A549 (cell line): ENCODE measurements at regions of chr1 and their contacts with region 1.

Region 1: DNA sequence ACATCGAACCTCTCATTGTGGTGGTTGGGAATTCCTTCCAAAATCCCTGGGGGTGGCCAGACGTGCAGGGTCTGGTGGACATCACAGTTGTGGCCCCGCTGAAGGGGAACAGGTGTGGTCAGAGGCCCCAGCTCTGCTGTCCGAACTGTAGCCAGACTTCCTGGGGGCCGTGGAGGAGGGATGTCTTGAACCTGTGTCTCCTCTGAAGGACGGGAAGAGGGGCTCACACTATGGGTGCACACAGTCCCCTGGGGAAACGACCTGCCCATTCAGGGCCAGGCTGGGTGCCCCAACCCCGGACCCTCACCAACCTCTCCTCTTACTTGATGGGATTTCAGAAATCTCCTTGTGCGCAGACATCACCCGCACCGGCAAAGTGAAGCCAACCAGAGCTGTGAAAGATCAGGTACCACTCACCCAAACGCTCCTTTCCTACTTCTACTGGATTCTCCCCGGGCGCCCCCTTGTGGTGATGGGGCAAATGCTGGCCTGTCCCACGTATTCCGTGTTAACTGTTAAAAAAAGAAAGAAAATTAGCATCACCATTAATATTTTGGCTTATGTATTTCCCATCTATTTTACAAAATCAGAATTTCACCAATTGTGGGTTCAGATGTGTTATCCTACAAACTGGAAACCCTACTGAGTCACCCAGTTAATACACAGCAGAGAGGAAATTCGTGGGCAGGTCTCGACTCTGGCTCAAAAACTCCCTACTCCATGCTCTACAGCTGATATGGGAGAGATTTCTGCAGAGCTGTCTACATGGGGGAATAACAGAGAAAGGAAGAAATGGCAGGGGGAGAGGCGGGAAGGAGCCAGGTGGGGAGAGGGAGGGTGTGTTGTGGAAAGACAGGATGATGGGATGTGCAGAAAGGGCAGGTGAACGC is 28.1 kb downstream of the PADI4 start:
- DNase-seq: peak; percentile 40 to 56
- ATAC-seq: peak; percentile 95 to 97
- H3K4me3 ChIP-seq: no peak overlapping the region
- H3K27ac ChIP-seq: peak overlapping the region; percentile 23 to 79; a peak in 5 of 6 replicates
- H3K4me1 ChIP-seq: no peaks in the 10 kb centered on the region
- CTCF ChIP-seq: peak; percentile 76
- EP300 ChIP-seq: no peak
- POLR2A ChIP-seq: no peak
- RAD21 ChIP-seq: peak; percentile 78 to 82

Region 2: DNA sequence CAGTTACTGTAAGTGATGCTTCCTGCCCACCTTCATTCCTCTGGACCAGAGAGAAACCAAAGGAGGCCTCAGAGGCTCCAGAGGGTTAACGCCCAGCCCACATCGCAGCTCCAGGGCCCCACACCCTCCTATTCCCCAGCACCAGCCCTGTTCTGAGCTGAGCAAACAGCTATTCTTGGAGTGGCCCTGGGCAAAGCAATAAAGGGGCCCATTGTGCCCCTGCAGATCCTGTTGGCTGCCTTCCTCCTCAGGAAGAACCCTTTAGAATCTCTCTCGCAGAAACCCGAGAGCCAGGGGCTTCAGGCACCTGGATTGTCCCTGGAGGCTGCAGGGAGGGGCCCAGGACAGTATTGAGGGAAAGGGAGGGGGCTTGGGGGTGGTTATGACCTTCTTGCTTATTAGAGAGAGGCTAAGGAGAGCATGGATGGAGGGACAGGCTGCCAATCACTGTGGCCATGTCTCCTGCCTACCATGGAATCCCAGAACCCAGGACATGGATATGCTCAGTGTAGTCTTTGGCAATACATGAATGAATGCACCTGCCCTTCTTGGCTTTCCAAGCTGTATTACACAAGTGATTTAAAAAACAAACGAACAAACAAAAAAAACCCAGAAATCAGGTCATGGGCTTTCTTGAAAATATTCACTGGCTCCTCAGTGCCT is 226.0 kb before region 1 on chr1:
- CTCF ChIA-PET with region 1: no interaction called
- POLR2A ChIA-PET with region 1: no interaction called
- DNase-seq: no peak
- ATAC-seq: no peak
- H3K4me3 ChIP-seq: no peak overlapping the region
- H3K27ac ChIP-seq: no peak overlapping the region
- H3K4me1 ChIP-seq: no peaks in the 10 kb centered on the region
- CTCF ChIP-seq: no peak
- EP300 ChIP-seq: no peak
- POLR2A ChIP-seq: no peak
- RAD21 ChIP-seq: no peak

Region 3: DNA sequence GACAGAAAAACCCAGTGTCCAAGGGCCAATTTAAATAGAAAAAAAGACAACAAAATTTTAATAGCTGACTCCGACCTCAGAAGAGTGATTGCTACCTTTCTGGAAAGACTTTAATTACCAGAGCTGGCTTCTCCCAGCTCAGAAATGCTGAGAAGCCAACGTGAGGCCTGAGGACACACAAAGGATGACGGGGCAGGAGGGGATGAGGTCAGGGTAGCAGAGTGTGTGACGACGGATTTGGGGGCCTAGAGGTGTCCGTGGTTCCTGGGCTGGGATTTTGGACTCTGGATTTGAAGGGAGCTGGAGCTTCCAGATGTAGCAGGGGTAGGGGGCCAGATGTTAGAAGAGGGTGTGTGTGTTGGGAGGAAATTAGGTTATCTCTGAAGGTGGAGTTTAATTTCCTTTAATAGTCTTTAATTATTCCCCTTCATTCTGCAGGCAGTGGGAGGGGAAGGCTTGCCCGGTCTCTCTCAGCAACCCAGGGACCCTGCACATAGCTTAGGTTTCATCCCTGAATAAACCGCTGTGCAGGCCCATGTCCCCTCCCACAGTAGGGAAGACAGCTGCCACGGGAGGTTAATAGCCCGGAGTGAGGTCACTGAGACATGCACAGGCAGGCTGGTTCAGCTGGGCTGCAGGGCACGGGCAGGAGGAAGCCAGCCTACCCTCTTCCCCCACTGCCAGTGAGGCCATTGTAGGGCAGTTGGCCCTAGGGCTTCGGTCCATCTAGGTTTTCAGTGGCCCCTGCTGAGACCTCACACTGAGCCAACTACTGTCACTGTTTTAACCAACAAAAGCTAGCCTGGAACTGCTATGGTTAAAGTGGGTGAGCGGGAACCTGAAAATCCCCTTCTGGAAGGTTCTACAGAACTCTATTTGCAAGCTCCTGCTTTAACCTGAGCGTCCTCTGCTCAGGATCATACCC is 91.0 kb before region 1 on chr1:
- CTCF ChIA-PET with region 1: interaction called, 28 read pairs
- POLR2A ChIA-PET with region 1: no interaction called
- DNase-seq: no peak
- ATAC-seq: no peak
- H3K4me3 ChIP-seq: no peak overlapping the region
- H3K27ac ChIP-seq: peak overlapping the region in 1 of 2 experiments; percentile 66; a peak in 3 of 6 replicates
- H3K4me1 ChIP-seq: peaks cover 10% of the 10 kb centered on the region
- CTCF ChIP-seq: no peak
- EP300 ChIP-seq: no peak
- POLR2A ChIP-seq: no peak
- RAD21 ChIP-seq: no peak

Region 4: GRCh38 chr1:17250601-17251000 is 85.5 kb before region 1 on chr1:
- CTCF ChIA-PET with region 1: interaction called, 17 read pairs
- POLR2A ChIA-PET with region 1: no interaction called
- DNase-seq: peak; percentile 80 to 82
- ATAC-seq: peak; percentile 86 to 89
- H3K4me3 ChIP-seq: no peak overlapping the region
- H3K27ac ChIP-seq: peak overlapping the region; percentile 92 to 97
- H3K4me1 ChIP-seq: peaks cover 30% of the 10 kb centered on the region
- CTCF ChIP-seq: no peak
- EP300 ChIP-seq: peak in 1 of 2 experiments; percentile 37; a peak in 2 of 5 replicates
- POLR2A ChIP-seq: no peak
- RAD21 ChIP-seq: no peak

Region 5: DNA sequence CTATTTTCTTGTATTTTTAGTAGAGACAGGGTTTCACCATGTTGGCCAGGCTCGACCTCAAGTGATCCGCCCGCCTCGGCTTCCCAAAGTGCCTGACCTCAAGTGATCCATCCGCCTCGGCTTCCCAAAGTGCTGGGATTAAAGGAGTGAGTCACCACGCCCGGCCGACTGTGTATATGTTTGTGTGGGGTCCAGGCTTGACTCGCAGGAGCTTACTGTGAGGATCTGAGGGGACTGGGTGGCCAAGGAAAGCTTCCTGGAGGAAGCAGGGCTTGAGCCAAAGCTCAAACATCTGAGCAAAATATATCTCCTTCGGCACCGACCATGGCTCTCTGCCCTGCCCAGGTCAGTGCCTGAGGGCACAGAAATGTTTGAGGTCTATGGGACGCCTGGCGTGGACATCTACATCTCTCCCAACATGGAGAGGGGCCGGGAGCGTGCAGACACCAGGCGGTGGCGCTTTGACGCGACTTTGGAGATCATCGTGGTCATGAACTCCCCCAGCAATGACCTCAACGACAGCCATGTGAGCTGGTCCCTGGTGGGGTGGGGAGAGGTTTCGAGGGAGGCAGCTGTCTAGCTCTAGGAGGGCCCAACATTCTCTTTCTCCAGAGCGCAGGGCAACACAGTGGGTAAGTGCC is 76.7 kb before region 1 on chr1:
- CTCF ChIA-PET with region 1: interaction called, 14 read pairs
- POLR2A ChIA-PET with region 1: no interaction called
- DNase-seq: no peak
- ATAC-seq: peak in 1 of 2 experiments; percentile 51; a peak in 2 of 6 replicates
- H3K4me3 ChIP-seq: no peak overlapping the region
- H3K27ac ChIP-seq: peak overlapping the region; percentile 49 to 84; a peak in 5 of 6 replicates
- H3K4me1 ChIP-seq: peaks cover 21% of the 10 kb centered on the region
- CTCF ChIP-seq: no peak
- EP300 ChIP-seq: no peak
- POLR2A ChIP-seq: no peak
- RAD21 ChIP-seq: no peak

Region 6: GRCh38 chr1:17287130-17287776 is 48.8 kb before region 1 on chr1:
- CTCF ChIA-PET with region 1: interaction called, 17 read pairs
- POLR2A ChIA-PET with region 1: no interaction called
- DNase-seq: peak; percentile 63 to 75
- ATAC-seq: peak; percentile 89 to 96
- H3K4me3 ChIP-seq: no peak overlapping the region
- H3K27ac ChIP-seq: peak overlapping the region; percentile 77 to 89
- H3K4me1 ChIP-seq: peaks cover 48% of the 10 kb centered on the region
- CTCF ChIP-seq: no peak
- EP300 ChIP-seq: peak; percentile 84 to 87; a peak in 4 of 5 replicates
- POLR2A ChIP-seq: no peak
- RAD21 ChIP-seq: peak; percentile 21 to 45; a peak in 3 of 5 replicates

Region 7: DNA sequence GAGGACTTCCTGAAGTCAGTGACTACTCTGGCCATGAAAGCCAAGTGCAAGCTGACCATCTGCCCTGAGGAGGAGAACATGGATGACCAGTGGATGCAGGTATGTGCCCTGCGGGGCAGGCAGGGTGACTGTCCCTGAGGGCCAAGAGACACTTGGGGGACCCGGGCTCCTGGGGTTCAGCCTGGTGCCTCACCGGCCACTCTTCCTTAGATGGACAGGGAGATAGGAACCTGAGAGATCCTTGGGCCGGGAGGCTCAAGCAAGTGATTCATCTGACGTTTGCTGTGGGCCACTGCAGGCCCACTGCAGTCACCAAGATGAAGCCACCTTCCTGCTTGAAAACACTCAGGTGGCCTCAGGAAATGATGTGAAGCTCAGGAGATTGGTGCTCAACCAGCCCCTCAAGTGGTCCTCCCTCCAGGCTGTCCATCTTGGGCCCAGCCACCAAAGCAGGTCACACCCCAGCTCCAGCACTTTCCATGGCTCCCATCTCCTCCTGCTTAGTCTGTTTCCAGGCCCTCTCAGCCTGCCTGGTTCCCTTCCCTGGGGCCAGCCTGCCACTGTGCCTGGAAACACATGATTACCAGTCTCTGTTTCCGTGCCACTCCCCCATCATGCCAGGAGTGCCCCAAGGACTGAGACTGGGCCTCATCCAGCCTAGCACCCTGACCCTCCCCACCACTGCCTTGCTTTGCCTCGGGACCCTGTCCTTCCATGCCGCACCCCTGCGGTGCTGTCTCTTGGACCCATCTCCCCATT is 10.2 kb after region 1 on chr1:
- CTCF ChIA-PET with region 1: interaction called, 11 read pairs
- POLR2A ChIA-PET with region 1: no interaction called
- DNase-seq: no peak
- ATAC-seq: no peak
- H3K4me3 ChIP-seq: no peak overlapping the region
- H3K27ac ChIP-seq: no peak overlapping the region
- H3K4me1 ChIP-seq: peaks cover 11% of the 10 kb centered on the region
- CTCF ChIP-seq: no peak
- EP300 ChIP-seq: no peak
- POLR2A ChIP-seq: no peak
- RAD21 ChIP-seq: no peak

Region 8: DNA sequence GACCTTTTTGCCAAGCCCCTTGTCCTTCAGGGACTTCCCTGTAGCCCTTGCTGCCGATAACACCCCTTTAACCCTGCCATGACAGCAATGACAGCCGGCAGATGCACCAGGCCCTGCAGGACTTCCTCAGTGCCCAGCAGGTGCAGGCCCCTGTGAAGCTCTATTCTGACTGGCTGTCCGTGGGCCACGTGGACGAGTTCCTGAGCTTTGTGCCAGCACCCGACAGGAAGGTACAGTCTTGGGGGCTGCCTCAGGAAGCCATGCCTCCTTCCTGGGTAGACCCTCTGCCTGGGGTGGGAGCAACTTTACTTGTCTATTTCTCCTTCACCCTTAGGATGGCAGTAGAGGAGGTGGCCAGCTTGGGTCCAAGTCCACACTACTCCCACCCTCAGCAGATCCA is 19.8 kb after region 1 on chr1:
- CTCF ChIA-PET with region 1: interaction called, 18 read pairs
- POLR2A ChIA-PET with region 1: no interaction called
- DNase-seq: no peak
- ATAC-seq: no peak
- H3K4me3 ChIP-seq: no peak overlapping the region
- H3K27ac ChIP-seq: no peak overlapping the region
- H3K4me1 ChIP-seq: no peaks in the 10 kb centered on the region
- CTCF ChIP-seq: no peak
- EP300 ChIP-seq: no peak
- POLR2A ChIP-seq: no peak
- RAD21 ChIP-seq: no peak